HepG2 (cell line): ENCODE measurements at regions of chr16 and their contacts with region 1.

Region 1: GRCh38 chr16:1964506-1965395 is at the start of gene RPS2:
- DNase-seq: peak; percentile 97
- ATAC-seq: peak; percentile 61
- H3K4me3 ChIP-seq: peak within 1 kb of the TSS; percentile 84 to 94 (median 92)
- H3K27ac ChIP-seq: peak within 1 kb of the TSS; percentile 88
- H3K4me1 ChIP-seq: peaks cover 44% of the 10 kb centered on the region
- H3K27me3 ChIP-seq: no peaks in the 10 kb centered on the region; a peak in 1 of 5 replicates
- CTCF ChIP-seq: peak; percentile 2; the same call in 1 of the 2 replicates
- EP300 ChIP-seq: peak in 1 of 2 experiments; percentile 26; a peak in 1 of 4 replicates
- POLR2A ChIP-seq: peak; percentile 100
- RAD21 ChIP-seq: peak; percentile 25
- total RNA-seq, gene RPS2: 1,908 and 1,988 TPM in 2 replicates

Region 2: GRCh38 chr16:1782352-1783091 is 182.2 kb before region 1 on chr16 and contains the starts of genes NUBP2 and SPSB3:
- CTCF ChIA-PET with region 1: no interaction called
- POLR2A ChIA-PET with region 1: interaction called, 17 read pairs
- in situ Hi-C with region 1: no loop called
- intact Hi-C with region 1: no loop called
- DNase-seq: peak; percentile 99
- ATAC-seq: peak; percentile 90
- H3K4me3 ChIP-seq: peak within 1 kb of the TSS; percentile 94 to 96 (median 94)
- H3K27ac ChIP-seq: peak within 1 kb of the TSS; percentile 70
- H3K4me1 ChIP-seq: peaks cover 22% of the 10 kb centered on the region
- H3K27me3 ChIP-seq: peaks cover 0 to 2% of the 10 kb centered on the region in 2 experiments; a peak in 1 of 5 replicates
- CTCF ChIP-seq: no peak
- EP300 ChIP-seq: no peak
- POLR2A ChIP-seq: peak; percentile 41 to 74; a peak in 3 of 4 replicates
- RAD21 ChIP-seq: no peak; the same call in 1 of the 2 replicates
- total RNA-seq, gene NUBP2: 43.8 and 61.5 TPM in 2 replicates
- total RNA-seq, gene SPSB3: 8.2 and 13.2 TPM in 2 replicates

Region 3: DNA sequence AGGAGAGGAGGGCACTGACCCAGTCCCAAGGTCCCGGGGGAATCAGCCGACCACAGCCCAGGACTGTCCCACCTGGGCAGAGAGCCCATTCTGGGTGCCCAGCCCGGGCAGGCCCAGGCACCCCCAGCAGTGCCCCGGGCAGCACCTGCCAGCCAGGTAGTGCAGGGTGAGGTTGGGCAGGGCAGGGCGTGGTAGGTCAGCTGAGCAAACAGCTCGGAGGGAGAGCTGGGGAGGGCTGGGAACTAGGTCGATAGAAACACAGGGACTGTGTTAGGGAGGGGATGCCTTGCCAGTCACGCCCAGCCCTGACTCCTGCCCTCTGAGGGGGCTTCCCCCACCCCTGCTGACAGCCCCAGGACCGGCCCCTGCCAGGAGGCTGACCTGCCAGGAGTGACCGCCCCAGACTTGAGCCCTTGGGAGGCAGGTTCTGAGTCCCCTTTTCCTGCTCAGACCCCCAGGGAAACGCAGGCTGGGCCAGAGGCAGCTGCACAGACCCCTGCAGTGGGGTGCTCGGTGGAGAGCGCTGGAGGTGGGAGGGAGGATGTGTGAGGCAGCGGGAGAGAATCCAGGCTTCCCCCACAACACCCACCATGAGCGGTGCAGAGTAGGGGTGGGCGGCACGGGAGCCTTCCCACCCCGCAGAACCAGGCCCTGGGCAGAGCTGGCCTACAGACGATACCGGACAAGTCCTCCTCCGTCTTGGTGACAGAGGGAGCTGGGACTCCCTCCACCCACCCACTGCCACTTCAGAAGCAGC is 51.2 kb before region 1 on chr16:
- CTCF ChIA-PET with region 1: no interaction called
- POLR2A ChIA-PET with region 1: no interaction called
- in situ Hi-C with region 1: no loop called
- intact Hi-C with region 1: no loop called
- DNase-seq: no peak
- ATAC-seq: peak; percentile 12
- H3K4me3 ChIP-seq: no peak overlapping the region
- H3K27ac ChIP-seq: no peak overlapping the region
- H3K4me1 ChIP-seq: peaks cover 9% of the 10 kb centered on the region
- H3K27me3 ChIP-seq: peaks cover 23 to 66% of the 10 kb centered on the region in 2 experiments
- CTCF ChIP-seq: no peak
- EP300 ChIP-seq: no peak
- POLR2A ChIP-seq: no peak
- RAD21 ChIP-seq: no peak

Region 4: DNA sequence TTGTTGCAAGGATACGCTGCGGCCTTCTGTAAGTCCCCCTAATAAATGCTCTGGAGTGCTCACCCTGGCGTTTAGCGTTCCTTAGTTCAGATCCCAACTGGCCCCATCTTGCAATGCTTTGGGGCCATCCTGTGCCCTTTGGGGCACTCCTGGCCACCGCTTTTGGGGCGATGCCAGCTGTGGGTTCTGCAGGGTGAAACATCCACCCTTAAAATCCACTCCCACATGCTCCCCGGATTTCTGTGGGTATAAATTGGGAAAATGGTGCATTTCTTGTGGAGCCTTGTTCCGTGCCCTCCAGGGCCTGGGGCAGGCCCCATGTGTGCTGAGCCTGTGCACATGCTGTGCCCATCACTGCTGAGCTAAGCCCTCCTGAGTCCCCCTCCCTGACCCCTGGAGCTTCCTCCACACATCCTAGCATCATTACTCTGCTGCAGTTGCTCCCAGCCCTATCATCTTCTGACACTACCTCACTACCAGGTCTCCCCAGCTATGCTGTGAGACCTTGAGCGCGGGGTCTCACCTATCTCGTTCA is 27.7 kb before region 1 on chr16:
- CTCF ChIA-PET with region 1: no interaction called
- POLR2A ChIA-PET with region 1: interaction called, 139 read pairs
- in situ Hi-C with region 1: no loop called
- intact Hi-C with region 1: loop called (anchors 2 kb)
- DNase-seq: no peak
- ATAC-seq: no peak
- H3K4me3 ChIP-seq: no peak overlapping the region
- H3K27ac ChIP-seq: peak overlapping the region; percentile 16
- H3K4me1 ChIP-seq: peaks cover 88% of the 10 kb centered on the region
- H3K27me3 ChIP-seq: no peaks in the 10 kb centered on the region
- CTCF ChIP-seq: no peak
- EP300 ChIP-seq: no peak
- POLR2A ChIP-seq: no peak
- RAD21 ChIP-seq: no peak

Region 5: DNA sequence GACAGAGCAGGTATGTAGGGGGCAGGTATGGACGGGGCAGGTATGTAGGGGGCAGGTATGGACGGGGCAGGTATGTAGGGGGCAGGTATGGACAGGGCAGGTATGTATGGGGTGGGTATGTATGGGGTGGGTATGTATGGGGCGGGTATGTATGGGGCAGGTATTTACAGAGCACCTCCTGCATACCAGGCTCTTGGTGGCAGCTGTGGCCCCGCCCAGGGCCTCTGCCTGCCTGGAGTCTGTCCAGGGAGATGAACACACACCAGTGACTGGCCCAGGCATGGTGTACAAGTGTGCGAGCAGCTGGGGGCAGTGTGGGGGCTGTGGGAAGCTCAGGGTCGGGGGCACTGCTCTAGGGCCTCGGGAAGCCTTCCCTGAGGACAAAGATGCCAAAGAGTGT is 14.7 kb before region 1 on chr16:
- CTCF ChIA-PET with region 1: no interaction called
- POLR2A ChIA-PET with region 1: interaction called, 27 read pairs
- in situ Hi-C with region 1: no loop called
- intact Hi-C with region 1: no loop called
- DNase-seq: no peak
- ATAC-seq: peak; percentile 37
- H3K4me3 ChIP-seq: no peak overlapping the region; a peak in 1 of 6 replicates
- H3K27ac ChIP-seq: no peak overlapping the region
- H3K4me1 ChIP-seq: peaks cover 38% of the 10 kb centered on the region
- H3K27me3 ChIP-seq: peaks cover 3 to 23% of the 10 kb centered on the region in 2 experiments; a peak in 4 of 5 replicates
- CTCF ChIP-seq: peak; percentile 27
- EP300 ChIP-seq: no peak
- POLR2A ChIP-seq: no peak
- RAD21 ChIP-seq: no peak

Region 6: GRCh38 chr16:1991948-1992703 is 27.4 kb after region 1 on chr16:
- CTCF ChIA-PET with region 1: no interaction called
- POLR2A ChIA-PET with region 1: interaction called, 16 read pairs
- in situ Hi-C with region 1: no loop called
- intact Hi-C with region 1: no loop called
- DNase-seq: no peak
- ATAC-seq: no peak
- H3K4me3 ChIP-seq: no peak overlapping the region
- H3K27ac ChIP-seq: no peak overlapping the region
- H3K4me1 ChIP-seq: peaks cover 48% of the 10 kb centered on the region
- H3K27me3 ChIP-seq: peaks cover 0 to 8% of the 10 kb centered on the region in 2 experiments; a peak in 2 of 5 replicates
- CTCF ChIP-seq: no peak
- EP300 ChIP-seq: no peak
- POLR2A ChIP-seq: no peak
- RAD21 ChIP-seq: no peak

Region 7: DNA sequence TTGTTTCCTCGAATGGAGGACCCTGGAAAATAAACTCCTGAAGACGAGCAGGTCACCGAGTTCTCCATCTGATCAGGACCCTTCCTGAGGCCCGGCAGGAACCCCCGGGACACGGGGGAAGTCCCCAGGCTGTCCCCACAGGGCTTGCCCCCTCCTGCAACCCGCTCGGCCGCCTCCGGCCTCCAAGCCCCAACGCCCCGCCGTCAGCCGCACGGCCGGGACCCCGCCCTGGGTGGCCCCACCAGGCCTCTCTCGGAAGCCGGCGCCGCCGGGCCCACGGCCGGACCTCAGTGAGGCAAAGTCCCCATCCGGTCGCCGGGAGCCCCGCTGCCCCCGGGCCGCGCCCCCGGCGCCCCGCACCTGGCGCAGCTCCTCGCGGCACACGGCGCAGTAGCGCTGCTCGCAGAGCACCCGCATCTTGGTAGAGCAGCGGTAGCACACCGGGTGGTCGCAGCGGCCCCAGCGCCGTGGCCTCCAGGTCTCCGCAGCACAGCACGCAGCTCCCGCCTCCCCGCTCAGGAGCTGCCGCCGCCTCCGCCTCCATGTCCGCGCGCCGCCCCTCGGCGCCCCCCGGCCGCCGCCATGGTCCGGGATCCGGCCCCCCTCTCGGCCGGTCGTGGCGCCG is 44.5 kb after region 1 on chr16:
- CTCF ChIA-PET with region 1: no interaction called
- POLR2A ChIA-PET with region 1: interaction called, 27 read pairs
- in situ Hi-C with region 1: no loop called
- intact Hi-C with region 1: no loop called
- DNase-seq: no peak
- ATAC-seq: peak; percentile 6
- H3K4me3 ChIP-seq: peak overlapping the region; percentile 76 to 81 (median 79)
- H3K27ac ChIP-seq: peak overlapping the region; percentile 78
- H3K4me1 ChIP-seq: peaks cover 69% of the 10 kb centered on the region
- H3K27me3 ChIP-seq: no peaks in the 10 kb centered on the region
- CTCF ChIP-seq: no peak
- EP300 ChIP-seq: no peak
- POLR2A ChIP-seq: no peak
- RAD21 ChIP-seq: no peak